ENCODE measurements at regions of chr1 and their contacts with region 1.

Region 1: GRCh38 chr1:226642876-226643576 is 94.5 kb downstream of the STUM start:
- DNase-seq: peak in 2 of 7 donors; percentile 39 to 40
- H3K4me3 ChIP-seq: no peak overlapping the region
- H3K27ac ChIP-seq: no peak overlapping the region
- H3K4me1 ChIP-seq: no peaks in the 10 kb centered on the region
- H3K27me3 ChIP-seq: no peaks in the 10 kb centered on the region
- CTCF ChIP-seq: no peak
- POLR2A ChIP-seq: no peak

Region 2: GRCh38 chr1:226390326-226391080 is 252.5 kb before region 1 on chr1:
- intact Hi-C with region 1: no loop called
- DNase-seq: no peak
- H3K4me3 ChIP-seq: no peak overlapping the region
- H3K27ac ChIP-seq: no peak overlapping the region
- H3K4me1 ChIP-seq: no peaks in the 10 kb centered on the region
- H3K27me3 ChIP-seq: no peaks in the 10 kb centered on the region
- CTCF ChIP-seq: no peak
- POLR2A ChIP-seq: no peak

Region 3: GRCh38 chr1:226697151-226697939 is 54.3 kb after region 1 on chr1:
- intact Hi-C with region 1: loop called in 1 of 2 experiments (anchors 10 kb)
- DNase-seq: no peak
- H3K4me3 ChIP-seq: no peak overlapping the region
- H3K27ac ChIP-seq: peak overlapping the region in 2 of 5 donors; percentile 7 to 29
- H3K4me1 ChIP-seq: peaks cover under 1 to 9% of the 10 kb centered on the region in 2 donors
- H3K27me3 ChIP-seq: no peaks in the 10 kb centered on the region
- CTCF ChIP-seq: no peak
- POLR2A ChIP-seq: no peak

Measured in adrenal gland (tissue), 19 donors.